ENCODE measurements at regions of chr12 and their contacts with region 1.

Region 1: DNA sequence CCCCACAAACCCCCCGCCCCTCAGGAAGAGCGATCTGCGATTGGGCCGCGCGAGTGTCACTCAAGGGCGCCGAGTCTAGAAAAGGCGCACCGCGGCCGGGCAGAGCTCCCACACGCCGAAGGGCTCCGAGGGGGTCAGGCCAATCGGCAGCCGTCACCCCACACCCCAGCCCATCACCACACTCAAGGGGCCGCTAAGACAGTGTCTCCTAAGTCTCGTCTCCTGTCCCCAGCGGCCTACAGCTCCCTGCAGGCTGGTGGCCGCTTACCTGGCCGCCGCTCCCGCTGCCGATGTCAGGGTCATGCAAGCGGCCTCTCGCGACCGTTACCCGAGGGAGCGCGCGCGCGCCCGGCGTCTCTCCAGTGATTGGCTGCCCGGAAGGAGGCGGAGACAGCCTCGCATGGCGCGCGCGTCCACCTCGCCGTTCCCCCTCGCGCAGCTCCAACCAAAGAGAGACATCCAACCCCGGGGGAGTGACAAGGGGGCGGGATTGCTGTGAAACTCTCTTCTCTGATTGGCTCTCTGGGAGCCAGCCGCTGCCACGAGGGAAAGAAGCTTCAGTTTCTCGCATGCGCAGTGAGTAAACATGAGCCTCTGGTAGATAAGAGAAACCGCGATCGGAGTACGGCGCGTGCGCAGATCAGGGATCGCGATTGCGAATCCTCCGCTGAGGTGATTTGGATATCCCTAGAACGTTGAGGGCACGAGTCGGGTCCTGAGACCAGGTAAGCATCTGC is at the starts of genes MPHOSPH9 and MTRFR:
- DNase-seq: peak; percentile 100
- H3K4me3 ChIP-seq: peak within 1 kb of the TSS; percentile 86
- H3K27ac ChIP-seq: peak within 1 kb of the TSS; percentile 88
- H3K4me1 ChIP-seq: peaks cover 29% of the 10 kb centered on the region
- H3K27me3 ChIP-seq: no peaks in the 10 kb centered on the region
- CTCF ChIP-seq: no peak
- total RNA-seq, gene MPHOSPH9: 80.8 and 95.7 TPM in 2 replicates
- total RNA-seq, gene MTRFR: 21.9 and 26.3 TPM in 2 replicates

Region 2: GRCh38 chr12:122813310-122813713 is 419.7 kb before region 1 on chr12:
- CTCF ChIA-PET with region 1: no interaction called
- POLR2A ChIA-PET with region 1: no interaction called
- intact Hi-C with region 1: no loop called
- DNase-seq: no peak
- H3K4me3 ChIP-seq: no peak overlapping the region
- H3K27ac ChIP-seq: no peak overlapping the region
- H3K4me1 ChIP-seq: no peaks in the 10 kb centered on the region
- H3K27me3 ChIP-seq: no peaks in the 10 kb centered on the region
- CTCF ChIP-seq: no peak

Region 3: DNA sequence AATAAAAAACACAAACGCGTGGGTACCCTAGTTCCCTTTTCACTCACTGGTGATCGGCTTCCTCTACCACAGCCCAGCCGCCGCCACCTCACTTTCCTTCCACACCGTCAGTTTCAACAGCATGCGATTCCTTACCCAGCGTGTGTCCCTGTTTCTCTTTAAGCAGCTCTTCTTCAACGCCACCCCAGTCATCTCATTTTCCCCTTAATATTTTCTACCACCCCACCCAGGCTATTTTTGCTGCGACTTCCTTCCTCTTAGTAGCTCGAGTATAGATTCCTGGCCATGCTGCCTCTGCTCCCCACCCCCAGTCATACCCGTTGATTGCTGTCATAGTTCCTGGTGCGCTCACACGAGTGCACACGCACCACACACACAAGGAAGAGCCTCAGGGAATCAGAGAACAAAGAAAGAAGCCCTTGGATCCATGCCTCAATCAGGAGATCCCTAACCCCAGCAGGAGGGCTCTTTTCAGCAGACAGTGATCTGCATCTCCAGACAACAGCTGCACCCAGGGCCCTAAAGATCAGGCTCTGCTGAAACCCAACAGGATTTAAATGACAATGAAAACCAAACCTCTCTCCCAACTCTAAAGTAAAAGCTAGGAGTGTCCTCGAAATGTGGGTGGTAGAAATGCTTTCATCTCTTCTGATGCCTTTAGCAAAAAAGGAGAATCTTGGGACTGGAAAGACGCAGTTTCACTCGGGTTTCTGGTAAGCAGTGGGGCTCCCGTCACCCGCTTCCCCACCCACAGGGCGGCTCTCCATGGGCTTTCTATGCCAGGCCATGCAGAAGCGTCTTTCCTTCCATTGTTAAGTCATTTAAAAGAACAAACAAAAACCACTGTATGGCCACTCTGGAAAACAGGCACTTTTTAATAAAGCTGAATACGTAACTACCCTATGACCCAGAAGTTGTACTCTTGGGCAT is 360.9 kb before region 1 on chr12:
- CTCF ChIA-PET with region 1: no interaction called
- POLR2A ChIA-PET with region 1: no interaction called
- intact Hi-C with region 1: loop called (anchors 10 kb)
- DNase-seq: peak; percentile 95
- H3K4me3 ChIP-seq: peak overlapping the region; percentile 40
- H3K27ac ChIP-seq: peak overlapping the region; percentile 86
- H3K4me1 ChIP-seq: peaks cover 57% of the 10 kb centered on the region
- H3K27me3 ChIP-seq: no peaks in the 10 kb centered on the region
- CTCF ChIP-seq: no peak

Region 4: GRCh38 chr12:122980183-122981046 is 252.6 kb before region 1 on chr12 and contains the start of gene ARL6IP4:
- CTCF ChIA-PET with region 1: no interaction called
- POLR2A ChIA-PET with region 1: no interaction called
- intact Hi-C with region 1: loop called (anchors 5 kb)
- DNase-seq: peak; percentile 79
- H3K4me3 ChIP-seq: peak within 1 kb of the TSS; percentile 72
- H3K27ac ChIP-seq: peak within 1 kb of the TSS; percentile 95
- H3K4me1 ChIP-seq: peaks cover 21% of the 10 kb centered on the region
- H3K27me3 ChIP-seq: no peaks in the 10 kb centered on the region
- CTCF ChIP-seq: no peak
- total RNA-seq, gene ARL6IP4: 180 and 189 TPM in 2 replicates

Region 5: DNA sequence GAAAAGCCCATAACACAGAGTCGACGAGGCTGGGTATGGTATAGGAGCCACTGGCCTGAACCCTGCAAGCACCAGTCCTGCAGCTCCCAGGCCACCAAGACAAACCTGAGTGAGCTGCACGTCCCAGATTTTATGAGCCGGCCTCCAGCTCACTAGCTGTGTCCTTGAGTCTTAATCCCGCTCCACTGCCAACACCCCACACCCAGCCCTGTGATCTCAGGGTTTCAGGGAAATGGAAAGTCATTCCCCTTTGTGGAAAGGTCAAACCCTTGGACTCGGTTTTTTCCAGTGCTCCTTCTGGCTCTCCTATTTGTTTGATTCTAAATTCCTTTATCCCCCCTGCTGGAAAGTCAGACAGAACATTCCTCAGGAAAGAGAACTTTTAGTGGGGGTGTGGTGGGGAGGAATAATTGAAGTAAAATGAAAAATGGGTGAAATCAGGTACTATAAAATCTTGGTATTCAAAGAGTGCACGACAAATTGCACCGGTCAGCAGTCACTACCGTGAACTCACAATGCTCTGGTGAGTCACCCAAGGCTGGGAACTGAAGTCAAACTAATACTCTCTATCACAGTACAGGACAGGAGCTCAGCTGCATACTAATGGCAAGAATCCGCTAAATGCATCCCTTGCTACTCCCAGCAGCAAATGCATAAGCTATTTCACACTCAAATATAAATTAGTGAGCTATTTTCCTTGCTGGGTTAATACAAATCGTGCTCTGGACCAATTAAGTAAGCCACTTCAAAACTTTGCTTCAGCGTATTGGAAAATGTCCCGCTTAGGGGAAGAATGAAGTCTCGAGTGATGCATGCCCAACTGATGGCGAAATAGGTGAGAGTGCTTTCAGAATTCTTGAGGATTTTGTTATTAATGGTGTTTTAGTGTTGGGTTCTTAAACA is 91.1 kb before region 1 on chr12:
- CTCF ChIA-PET with region 1: no interaction called
- POLR2A ChIA-PET with region 1: interaction called, 22 read pairs
- intact Hi-C with region 1: no loop called
- DNase-seq: no peak
- H3K4me3 ChIP-seq: no peak overlapping the region
- H3K27ac ChIP-seq: no peak overlapping the region
- H3K4me1 ChIP-seq: no peaks in the 10 kb centered on the region
- H3K27me3 ChIP-seq: no peaks in the 10 kb centered on the region
- CTCF ChIP-seq: no peak

Region 6: DNA sequence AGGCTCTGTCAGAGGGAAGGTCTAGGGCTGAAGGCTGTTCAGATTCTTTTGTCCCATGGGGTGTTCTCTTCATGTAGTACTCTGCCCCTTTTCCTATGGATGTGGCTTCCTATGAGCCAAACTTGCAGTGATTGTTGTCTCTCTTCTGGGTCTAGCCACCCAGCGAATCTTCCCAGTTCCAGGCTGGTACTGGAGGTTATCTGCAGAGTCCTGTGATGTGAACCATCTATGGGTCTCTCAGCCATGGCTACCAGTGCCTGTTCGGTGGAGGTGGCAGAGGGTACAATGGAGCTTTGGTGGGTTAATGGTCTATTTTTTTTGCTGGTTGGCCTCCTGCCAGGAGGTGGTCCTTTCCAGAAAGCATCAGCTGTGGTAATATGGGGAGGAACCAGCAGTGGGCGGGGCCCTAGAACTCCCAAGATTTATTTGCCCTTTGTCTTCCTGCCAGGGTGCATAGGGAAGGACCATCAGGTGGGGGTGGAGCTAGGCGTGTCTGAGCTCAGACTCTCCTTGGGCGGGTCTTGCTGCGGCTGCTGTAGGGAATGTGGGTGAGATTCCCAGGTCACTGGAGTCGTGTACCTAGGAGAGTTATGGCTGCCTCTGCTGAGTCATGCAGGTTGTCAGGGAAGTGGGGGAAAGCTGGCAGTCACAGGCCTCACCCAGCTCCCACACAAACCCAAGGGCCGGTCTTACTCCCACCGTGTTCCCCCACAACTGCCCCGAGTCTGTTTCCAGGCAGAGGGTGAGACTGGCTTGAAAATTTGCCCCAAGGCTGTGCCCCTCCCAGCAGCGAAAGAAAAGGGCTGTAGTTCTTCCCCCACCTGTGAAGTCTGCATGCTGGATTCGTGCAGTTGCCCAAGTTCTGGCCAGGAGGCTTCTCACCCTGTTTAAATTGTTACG is 17.8 kb after region 1 on chr12:
- CTCF ChIA-PET with region 1: interaction called, 10 read pairs
- POLR2A ChIA-PET with region 1: interaction called, 6 read pairs
- intact Hi-C with region 1: no loop called
- DNase-seq: peak; percentile 56
- H3K4me3 ChIP-seq: no peak overlapping the region
- H3K27ac ChIP-seq: peak overlapping the region; percentile 71
- H3K4me1 ChIP-seq: peaks cover 15% of the 10 kb centered on the region
- H3K27me3 ChIP-seq: no peaks in the 10 kb centered on the region
- CTCF ChIP-seq: no peak

Region 7: GRCh38 chr12:123293178-123293760 is 60.3 kb after region 1 on chr12:
- CTCF ChIA-PET with region 1: no interaction called
- POLR2A ChIA-PET with region 1: no interaction called
- intact Hi-C with region 1: no loop called
- DNase-seq: no peak
- H3K4me3 ChIP-seq: no peak overlapping the region
- H3K27ac ChIP-seq: peak overlapping the region; percentile 34
- H3K4me1 ChIP-seq: no peaks in the 10 kb centered on the region
- H3K27me3 ChIP-seq: no peaks in the 10 kb centered on the region
- CTCF ChIP-seq: no peak

Region 8: GRCh38 chr12:124518051-124518932 is 1285.3 kb after region 1 on chr12:
- CTCF ChIA-PET with region 1: no interaction called
- POLR2A ChIA-PET with region 1: no interaction called
- intact Hi-C with region 1: no loop called
- DNase-seq: peak; percentile 99
- H3K4me3 ChIP-seq: peak overlapping the region; percentile 57
- H3K27ac ChIP-seq: peak overlapping the region; percentile 96
- H3K4me1 ChIP-seq: peaks cover 50% of the 10 kb centered on the region
- H3K27me3 ChIP-seq: no peaks in the 10 kb centered on the region
- CTCF ChIP-seq: no peak